Endothelial cell of umbilical vein (primary cell): ENCODE measurements at regions of chr1 and their contacts with region 1.

Region 1: DNA sequence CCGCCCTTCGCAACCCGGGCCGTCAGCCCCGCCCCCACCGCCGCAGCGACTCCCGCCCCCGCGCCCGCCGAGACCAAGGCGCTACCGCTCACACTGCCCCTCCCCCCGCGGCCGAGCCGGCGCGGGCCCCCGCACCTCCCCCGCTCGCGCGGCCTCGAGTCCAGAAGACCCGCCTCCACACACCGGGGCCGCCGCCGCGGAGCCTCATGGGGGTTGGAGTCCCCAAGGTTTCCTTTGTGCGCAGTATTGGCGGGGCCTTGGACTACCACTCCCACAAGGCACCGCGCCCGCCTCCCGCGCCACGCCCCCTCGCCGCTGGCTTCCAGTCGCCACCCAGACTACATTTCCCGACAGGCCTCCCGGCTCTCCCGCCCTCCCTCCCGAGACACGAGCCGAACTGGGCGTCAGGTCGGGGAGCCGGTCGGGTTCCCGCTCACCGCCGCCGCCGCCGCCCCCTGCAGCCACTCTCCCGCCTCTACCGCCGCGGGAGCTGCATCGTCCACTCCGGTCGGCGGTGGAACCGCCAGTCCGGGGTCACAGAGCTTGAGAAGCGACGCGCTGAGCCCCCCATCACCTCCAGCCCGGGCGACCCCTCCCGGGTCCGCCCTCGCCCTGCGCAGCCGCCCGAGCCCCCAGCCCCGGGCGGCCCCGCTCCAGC is at the start of gene PHF13:
- DNase-seq: peak; percentile 99
- H3K4me3 ChIP-seq: peak within 1 kb of the TSS; percentile 55 to 97 (median 93)
- H3K27ac ChIP-seq: peak within 1 kb of the TSS; percentile 32
- H3K4me1 ChIP-seq: peaks cover 5% of the 10 kb centered on the region
- H3K27me3 ChIP-seq: no peaks in the 10 kb centered on the region
- CTCF ChIP-seq: no peak
- POLR2A ChIP-seq: no peak
- total RNA-seq, gene PHF13: 17.8 and 18.6 TPM in 2 replicates

Region 2: GRCh38 chr1:6579374-6580118 is 33.9 kb before region 1 on chr1 and contains the start of gene ZBTB48:
- CTCF ChIA-PET with region 1: interaction called, 4 read pairs
- POLR2A ChIA-PET with region 1: no interaction called
- dilution Hi-C with region 1: no loop called
- intact Hi-C with region 1: loop called (anchors 1 kb)
- DNase-seq: peak; percentile 97
- H3K4me3 ChIP-seq: peak within 1 kb of the TSS; percentile 57 to 98 (median 65)
- H3K27ac ChIP-seq: peak within 1 kb of the TSS; percentile 57
- H3K4me1 ChIP-seq: peaks cover 14% of the 10 kb centered on the region
- H3K27me3 ChIP-seq: no peaks in the 10 kb centered on the region
- CTCF ChIP-seq: no peak
- POLR2A ChIP-seq: peak; percentile 98
- total RNA-seq, gene ZBTB48: 25.1 and 29.2 TPM in 2 replicates

Region 3: GRCh38 chr1:6624710-6625583 is 11.5 kb after region 1 on chr1 and contains the start of gene THAP3:
- CTCF ChIA-PET with region 1: interaction called, 5 read pairs
- POLR2A ChIA-PET with region 1: no interaction called
- dilution Hi-C with region 1: no loop called
- intact Hi-C with region 1: loop called (anchors 1 kb)
- DNase-seq: peak; percentile 82
- H3K4me3 ChIP-seq: peak within 1 kb of the TSS; percentile 54 to 72 (median 58)
- H3K27ac ChIP-seq: peak within 1 kb of the TSS; percentile 13
- H3K4me1 ChIP-seq: peaks cover 4% of the 10 kb centered on the region
- H3K27me3 ChIP-seq: no peaks in the 10 kb centered on the region
- CTCF ChIP-seq: no peak
- POLR2A ChIP-seq: no peak
- total RNA-seq, gene THAP3: 15.2 and 16.7 TPM in 2 replicates